Endothelial cell of umbilical vein (primary cell): ENCODE measurements at regions of chr16 and their contacts with region 1.

Region 1: GRCh38 chr16:68229431-68230198 is 6.3 kb downstream of the ESRP2 start:
- DNase-seq: peak; percentile 66
- H3K4me3 ChIP-seq: no peak overlapping the region
- H3K27ac ChIP-seq: no peak overlapping the region
- H3K4me1 ChIP-seq: no peaks in the 10 kb centered on the region
- H3K27me3 ChIP-seq: no peaks in the 10 kb centered on the region
- CTCF ChIP-seq: peak; percentile 83
- POLR2A ChIP-seq: no peak

Region 2: GRCh38 chr16:67993189-67994039 is 236.2 kb before region 1 on chr16:
- CTCF ChIA-PET with region 1: interaction called, 8 read pairs
- POLR2A ChIA-PET with region 1: no interaction called
- dilution Hi-C with region 1: no loop called
- intact Hi-C with region 1: loop called (anchors 1 kb)
- DNase-seq: peak; percentile 71
- H3K4me3 ChIP-seq: no peak overlapping the region
- H3K27ac ChIP-seq: peak overlapping the region; percentile 9
- H3K4me1 ChIP-seq: peaks cover 4% of the 10 kb centered on the region
- H3K27me3 ChIP-seq: no peaks in the 10 kb centered on the region
- CTCF ChIP-seq: peak; percentile 99
- POLR2A ChIP-seq: no peak

Region 3: GRCh38 chr16:68049449-68049848 is 180.2 kb before region 1 on chr16:
- CTCF ChIA-PET with region 1: no interaction called
- POLR2A ChIA-PET with region 1: no interaction called
- dilution Hi-C with region 1: no loop called
- intact Hi-C with region 1: loop called (anchors 1 kb)
- DNase-seq: no peak
- H3K4me3 ChIP-seq: no peak overlapping the region
- H3K27ac ChIP-seq: no peak overlapping the region
- H3K4me1 ChIP-seq: no peaks in the 10 kb centered on the region
- H3K27me3 ChIP-seq: no peaks in the 10 kb centered on the region
- CTCF ChIP-seq: no peak
- POLR2A ChIP-seq: no peak

Region 4: DNA sequence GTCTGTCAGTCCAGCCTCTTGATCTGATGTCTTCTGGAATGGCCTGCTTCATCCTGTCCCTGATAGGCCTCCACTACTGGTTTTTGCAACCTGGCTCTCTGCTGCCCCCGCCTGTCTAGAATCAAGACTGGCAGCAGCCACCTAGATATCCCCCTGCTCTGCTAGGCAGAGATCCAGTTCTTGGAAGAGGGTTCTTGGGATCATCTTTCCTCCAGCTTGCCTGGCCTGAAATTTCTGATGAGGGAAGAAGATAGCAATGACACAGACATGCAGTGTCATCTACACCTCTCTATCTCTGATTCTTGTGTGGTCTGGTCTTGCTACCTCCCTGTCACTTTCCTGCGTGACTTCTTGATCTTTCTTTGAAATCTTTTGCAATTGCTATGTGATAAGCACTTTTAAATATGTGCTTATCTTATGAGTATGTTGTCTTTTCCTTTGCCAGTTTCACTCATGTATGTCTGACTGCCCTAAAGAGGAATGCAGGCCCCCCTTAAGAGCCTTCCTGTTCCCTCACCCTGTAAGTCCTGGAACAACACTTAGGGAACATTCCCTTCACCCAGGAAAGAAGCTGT is 164.7 kb before region 1 on chr16:
- CTCF ChIA-PET with region 1: interaction called, 6 read pairs
- POLR2A ChIA-PET with region 1: no interaction called
- dilution Hi-C with region 1: no loop called
- intact Hi-C with region 1: loop called (anchors 1 kb)
- DNase-seq: peak; percentile 77
- H3K4me3 ChIP-seq: no peak overlapping the region
- H3K27ac ChIP-seq: no peak overlapping the region
- H3K4me1 ChIP-seq: peaks cover 19% of the 10 kb centered on the region
- H3K27me3 ChIP-seq: no peaks in the 10 kb centered on the region
- CTCF ChIP-seq: peak; percentile 80 to 83
- POLR2A ChIP-seq: no peak

Region 5: GRCh38 chr16:68085259-68086071 is 144.2 kb before region 1 on chr16 and contains the start of gene NFATC3:
- CTCF ChIA-PET with region 1: interaction called, 8 read pairs
- POLR2A ChIA-PET with region 1: no interaction called
- dilution Hi-C with region 1: no loop called
- intact Hi-C with region 1: loop called (anchors 1 kb)
- DNase-seq: peak; percentile 95
- H3K4me3 ChIP-seq: peak within 1 kb of the TSS; percentile 67 to 97 (median 89)
- H3K27ac ChIP-seq: peak within 1 kb of the TSS; percentile 94
- H3K4me1 ChIP-seq: peaks cover 22% of the 10 kb centered on the region
- H3K27me3 ChIP-seq: no peaks in the 10 kb centered on the region
- CTCF ChIP-seq: no peak
- POLR2A ChIP-seq: no peak
- total RNA-seq, gene NFATC3: 30.5 and 33.1 TPM in 2 replicates

Region 6: GRCh38 chr16:68093816-68094613 is 135.6 kb before region 1 on chr16:
- CTCF ChIA-PET with region 1: interaction called, 57 read pairs
- POLR2A ChIA-PET with region 1: no interaction called
- dilution Hi-C with region 1: no loop called
- intact Hi-C with region 1: loop called (anchors 1 kb)
- DNase-seq: no peak
- H3K4me3 ChIP-seq: no peak overlapping the region
- H3K27ac ChIP-seq: no peak overlapping the region
- H3K4me1 ChIP-seq: peaks cover 3% of the 10 kb centered on the region
- H3K27me3 ChIP-seq: no peaks in the 10 kb centered on the region
- CTCF ChIP-seq: peak in 1 of 2 donors; percentile 30
- POLR2A ChIP-seq: no peak

Region 7: DNA sequence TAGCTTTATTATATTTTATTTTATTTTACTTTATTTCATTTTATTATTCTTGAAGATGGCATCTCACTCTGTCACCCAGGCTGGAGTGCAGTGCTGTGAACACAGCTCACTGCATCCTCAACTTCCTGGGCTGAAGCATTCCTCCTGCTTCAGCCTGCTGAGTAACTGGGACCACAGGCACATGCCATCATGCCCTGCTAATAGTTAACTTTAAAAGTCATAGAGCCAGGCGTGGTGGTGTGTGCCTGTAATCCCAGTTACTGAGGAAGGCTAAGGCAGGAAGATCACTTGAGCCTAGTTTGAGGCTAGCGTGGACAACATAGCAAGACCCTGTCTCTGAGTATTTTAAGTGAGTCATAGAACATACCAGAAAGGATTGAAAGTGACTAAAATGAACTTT is 32.4 kb before region 1 on chr16:
- CTCF ChIA-PET with region 1: no interaction called
- POLR2A ChIA-PET with region 1: no interaction called
- dilution Hi-C with region 1: no loop called
- intact Hi-C with region 1: no loop called
- DNase-seq: no peak
- H3K4me3 ChIP-seq: no peak overlapping the region
- H3K27ac ChIP-seq: no peak overlapping the region
- H3K4me1 ChIP-seq: peaks cover 7% of the 10 kb centered on the region
- H3K27me3 ChIP-seq: no peaks in the 10 kb centered on the region
- CTCF ChIP-seq: no peak
- POLR2A ChIP-seq: no peak

Region 8: GRCh38 chr16:68214726-68215125 is 14.9 kb before region 1 on chr16:
- CTCF ChIA-PET with region 1: interaction called, 12 read pairs
- POLR2A ChIA-PET with region 1: no interaction called
- dilution Hi-C with region 1: no loop called
- intact Hi-C with region 1: no loop called
- DNase-seq: no peak
- H3K4me3 ChIP-seq: no peak overlapping the region
- H3K27ac ChIP-seq: no peak overlapping the region
- H3K4me1 ChIP-seq: no peaks in the 10 kb centered on the region
- H3K27me3 ChIP-seq: no peaks in the 10 kb centered on the region
- CTCF ChIP-seq: no peak
- POLR2A ChIP-seq: no peak

Region 9: GRCh38 chr16:68367030-68367429 is 137.4 kb after region 1 on chr16:
- CTCF ChIA-PET with region 1: no interaction called
- POLR2A ChIA-PET with region 1: no interaction called
- dilution Hi-C with region 1: no loop called
- intact Hi-C with region 1: no loop called
- DNase-seq: peak; percentile 22
- H3K4me3 ChIP-seq: no peak overlapping the region
- H3K27ac ChIP-seq: no peak overlapping the region
- H3K4me1 ChIP-seq: no peaks in the 10 kb centered on the region
- H3K27me3 ChIP-seq: no peaks in the 10 kb centered on the region
- CTCF ChIP-seq: peak; percentile 15 to 53
- POLR2A ChIP-seq: no peak